ENCODE measurements at regions of chr2 and their contacts with region 1.

Region 1: DNA sequence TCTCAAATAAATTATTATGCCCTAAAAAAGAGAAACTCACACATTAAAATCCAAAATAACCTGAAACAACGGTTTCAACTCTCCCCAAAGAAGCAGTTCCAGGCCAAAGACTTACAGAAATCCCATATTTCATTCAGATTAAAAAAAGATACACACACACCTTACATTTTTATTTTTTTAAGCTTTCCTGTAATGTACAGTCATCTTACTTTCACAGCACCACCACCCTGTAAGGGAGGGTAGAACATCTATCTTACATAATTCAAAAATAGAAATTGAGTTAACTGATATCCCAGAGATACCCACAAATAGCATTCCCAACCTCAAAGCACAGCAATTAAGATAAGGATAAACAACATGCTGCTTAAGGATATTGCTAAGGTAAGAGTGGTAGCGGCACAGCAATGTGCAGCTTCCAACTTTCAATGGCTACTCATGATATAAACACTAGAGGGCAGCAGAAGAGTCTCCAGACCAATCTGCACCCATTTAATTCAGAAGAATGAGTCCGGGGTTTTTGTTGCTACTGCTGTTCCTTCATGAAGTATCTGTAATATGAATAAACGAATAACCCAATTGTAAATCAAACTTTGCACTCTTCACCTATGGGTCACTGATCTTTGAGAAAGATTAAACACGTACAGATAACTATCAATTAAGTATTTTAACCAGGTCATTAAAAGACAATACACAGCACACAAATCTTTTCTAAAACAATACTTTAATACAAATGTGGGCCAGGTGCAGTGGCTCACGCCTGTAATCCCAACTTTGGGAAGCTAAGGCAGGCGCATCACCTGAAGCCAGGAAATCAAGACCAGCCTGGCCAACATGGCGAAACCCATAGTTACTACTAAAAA is 11.3 kb downstream of the GFPT1 start:
- DNase-seq: peak; percentile 38
- H3K4me3 ChIP-seq: no peak overlapping the region
- H3K27ac ChIP-seq: no peak overlapping the region
- H3K4me1 ChIP-seq: no peaks in the 10 kb centered on the region
- CTCF ChIP-seq: peak; percentile 80

Region 2: GRCh38 chr2:69253611-69254288 is 122.0 kb before region 1 on chr2:
- CTCF ChIA-PET with region 1: no interaction called
- POLR2A ChIA-PET with region 1: no interaction called
- intact Hi-C with region 1: no loop called
- DNase-seq: no peak
- H3K4me3 ChIP-seq: no peak overlapping the region
- H3K27ac ChIP-seq: no peak overlapping the region
- H3K4me1 ChIP-seq: no peaks in the 10 kb centered on the region
- CTCF ChIP-seq: no peak

Region 3: GRCh38 chr2:69358914-69359313 is 16.8 kb before region 1 on chr2:
- CTCF ChIA-PET with region 1: no interaction called
- POLR2A ChIA-PET with region 1: no interaction called
- intact Hi-C with region 1: no loop called
- DNase-seq: no peak
- H3K4me3 ChIP-seq: no peak overlapping the region
- H3K27ac ChIP-seq: no peak overlapping the region
- H3K4me1 ChIP-seq: no peaks in the 10 kb centered on the region
- CTCF ChIP-seq: no peak

Region 4: DNA sequence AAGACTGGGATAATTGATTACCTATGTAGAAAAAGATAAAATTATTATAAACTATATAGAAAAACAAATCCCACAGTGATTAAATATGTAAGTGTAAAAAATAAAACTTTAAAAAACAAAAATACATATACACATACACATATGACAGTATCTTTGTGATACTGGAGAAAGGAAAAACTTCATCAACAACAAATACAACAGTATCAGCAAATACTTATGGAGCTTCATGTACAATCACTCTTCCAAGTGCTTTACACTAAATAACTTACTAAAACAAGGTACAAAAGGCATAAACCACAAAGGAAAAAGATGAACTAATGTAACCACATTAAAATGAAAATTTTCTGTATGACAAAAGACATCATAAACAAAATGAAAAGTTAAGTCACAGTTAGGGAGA is 35.4 kb after region 1 on chr2:
- CTCF ChIA-PET with region 1: no interaction called
- POLR2A ChIA-PET with region 1: no interaction called
- intact Hi-C with region 1: no loop called
- DNase-seq: no peak
- H3K4me3 ChIP-seq: no peak overlapping the region
- H3K27ac ChIP-seq: no peak overlapping the region
- H3K4me1 ChIP-seq: no peaks in the 10 kb centered on the region
- CTCF ChIP-seq: no peak

Region 5: DNA sequence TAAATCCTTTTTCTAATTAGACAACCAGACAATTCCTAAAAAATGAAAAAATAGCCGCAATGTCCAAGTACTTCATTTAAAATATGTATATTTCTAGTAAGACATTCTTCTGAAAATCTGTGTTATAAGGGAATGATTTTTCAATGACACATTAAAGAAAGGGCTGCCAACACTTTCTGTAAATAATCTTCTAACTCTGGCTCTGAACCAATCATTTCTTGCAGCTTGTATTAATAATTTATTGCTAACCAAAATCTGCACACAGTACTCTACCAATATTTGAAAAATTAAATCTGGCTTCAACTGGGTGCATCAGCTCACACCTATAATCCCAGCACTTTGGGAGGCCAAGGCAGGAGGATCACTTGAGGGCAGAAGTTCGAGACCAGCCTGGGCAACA is 53.3 kb after region 1 on chr2:
- CTCF ChIA-PET with region 1: no interaction called
- POLR2A ChIA-PET with region 1: no interaction called
- intact Hi-C with region 1: no loop called
- DNase-seq: no peak
- H3K4me3 ChIP-seq: no peak overlapping the region
- H3K27ac ChIP-seq: no peak overlapping the region
- H3K4me1 ChIP-seq: no peaks in the 10 kb centered on the region
- CTCF ChIP-seq: no peak

Region 6: GRCh38 chr2:69565431-69565839 is 189.7 kb after region 1 on chr2:
- CTCF ChIA-PET with region 1: no interaction called
- POLR2A ChIA-PET with region 1: no interaction called
- intact Hi-C with region 1: loop called (anchors 5 kb)
- DNase-seq: peak; percentile 61
- H3K4me3 ChIP-seq: no peak overlapping the region
- H3K27ac ChIP-seq: no peak overlapping the region
- H3K4me1 ChIP-seq: no peaks in the 10 kb centered on the region
- CTCF ChIP-seq: peak; percentile 92